ENCODE measurements at regions of chr12 and their contacts with region 1.

Region 1: DNA sequence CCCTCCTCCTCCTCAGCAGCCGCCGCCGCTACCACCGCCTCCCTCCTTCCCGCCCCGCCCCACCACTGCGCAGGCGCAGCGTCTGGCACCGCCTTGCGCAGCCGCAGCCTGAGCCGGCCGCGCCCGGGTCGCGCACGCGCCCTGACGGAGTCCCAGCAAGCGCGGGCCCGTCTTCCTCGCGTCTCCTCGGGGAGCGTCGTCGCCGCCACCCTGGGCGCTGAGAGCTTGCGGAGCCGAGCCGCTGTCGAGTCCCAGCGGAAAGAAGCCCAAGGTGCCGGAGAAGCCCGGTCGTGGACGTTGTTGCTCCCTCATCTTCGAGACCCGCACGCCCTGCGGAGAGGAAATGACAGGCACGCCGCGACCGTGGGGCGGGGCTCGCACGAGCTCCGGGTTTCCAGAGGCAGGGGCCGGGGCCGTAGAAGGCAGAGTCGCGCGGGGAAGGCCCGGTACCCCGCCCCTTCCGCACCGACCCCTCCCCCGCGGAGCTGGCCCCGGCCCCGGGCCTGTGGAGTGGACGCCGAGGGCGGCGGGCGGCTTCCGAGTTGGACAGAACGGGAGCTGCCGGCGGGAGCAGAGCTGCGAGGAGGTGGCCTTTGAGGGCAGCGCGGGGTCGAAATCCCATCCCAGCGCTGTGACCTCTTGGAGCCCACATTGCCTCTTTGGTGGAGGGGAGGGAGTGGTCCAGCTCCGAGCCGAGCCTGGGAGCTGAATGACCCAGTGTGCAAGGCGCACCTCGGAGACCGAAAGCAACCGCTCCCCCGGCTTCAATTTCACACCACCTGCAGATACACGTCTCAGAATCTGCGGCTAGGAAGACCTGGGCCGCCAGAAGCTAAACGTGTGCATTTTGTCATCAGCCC is 469 bp upstream of the RAB35 start:
- DNase-seq: peak; percentile 44 to 96 (median 92)

Region 2: DNA sequence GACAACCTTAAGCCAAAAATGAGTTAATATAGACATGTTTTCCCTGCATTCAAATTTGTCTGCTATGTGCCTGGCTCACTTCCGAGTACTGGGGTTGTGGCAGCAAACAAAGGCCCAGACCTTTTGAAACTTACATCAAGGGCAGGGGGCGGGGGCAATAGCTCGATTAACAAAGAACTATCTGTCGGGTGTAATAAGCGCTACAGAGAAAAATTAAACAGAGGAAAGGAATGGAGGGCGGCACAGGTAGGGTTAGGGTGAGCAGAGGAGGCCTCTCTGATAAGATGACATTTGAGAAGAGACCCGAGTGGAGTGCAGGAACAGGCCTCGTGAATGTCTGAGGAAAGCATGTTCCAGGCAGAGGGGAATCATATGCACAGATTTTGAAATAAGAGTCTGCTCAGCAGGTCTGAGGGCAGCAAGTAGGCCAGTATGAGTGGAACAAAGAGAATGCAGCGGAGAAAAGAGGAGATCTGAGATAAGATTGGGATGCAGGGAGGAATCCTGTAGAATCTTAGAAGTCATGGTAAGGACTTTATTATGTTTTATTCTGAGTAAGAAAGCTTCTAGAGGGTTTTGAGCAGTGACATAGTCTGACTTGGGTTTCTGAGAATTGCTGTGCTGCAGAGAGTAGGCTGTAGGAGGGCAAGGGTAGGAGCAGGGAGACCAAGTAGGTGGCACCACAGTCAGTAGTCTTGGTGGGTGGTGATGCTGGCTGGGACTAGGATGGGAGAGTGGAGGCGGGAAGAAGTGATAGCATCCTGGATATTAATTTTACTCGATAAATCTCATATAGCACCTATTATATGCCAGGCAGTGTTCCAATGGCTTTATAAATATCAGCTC is 75.4 kb before region 1 on chr12:
- intact Hi-C with region 1: no loop called
- DNase-seq: peak in 30 of 42 donors; percentile 7 to 84 (median 36)

Region 3: DNA sequence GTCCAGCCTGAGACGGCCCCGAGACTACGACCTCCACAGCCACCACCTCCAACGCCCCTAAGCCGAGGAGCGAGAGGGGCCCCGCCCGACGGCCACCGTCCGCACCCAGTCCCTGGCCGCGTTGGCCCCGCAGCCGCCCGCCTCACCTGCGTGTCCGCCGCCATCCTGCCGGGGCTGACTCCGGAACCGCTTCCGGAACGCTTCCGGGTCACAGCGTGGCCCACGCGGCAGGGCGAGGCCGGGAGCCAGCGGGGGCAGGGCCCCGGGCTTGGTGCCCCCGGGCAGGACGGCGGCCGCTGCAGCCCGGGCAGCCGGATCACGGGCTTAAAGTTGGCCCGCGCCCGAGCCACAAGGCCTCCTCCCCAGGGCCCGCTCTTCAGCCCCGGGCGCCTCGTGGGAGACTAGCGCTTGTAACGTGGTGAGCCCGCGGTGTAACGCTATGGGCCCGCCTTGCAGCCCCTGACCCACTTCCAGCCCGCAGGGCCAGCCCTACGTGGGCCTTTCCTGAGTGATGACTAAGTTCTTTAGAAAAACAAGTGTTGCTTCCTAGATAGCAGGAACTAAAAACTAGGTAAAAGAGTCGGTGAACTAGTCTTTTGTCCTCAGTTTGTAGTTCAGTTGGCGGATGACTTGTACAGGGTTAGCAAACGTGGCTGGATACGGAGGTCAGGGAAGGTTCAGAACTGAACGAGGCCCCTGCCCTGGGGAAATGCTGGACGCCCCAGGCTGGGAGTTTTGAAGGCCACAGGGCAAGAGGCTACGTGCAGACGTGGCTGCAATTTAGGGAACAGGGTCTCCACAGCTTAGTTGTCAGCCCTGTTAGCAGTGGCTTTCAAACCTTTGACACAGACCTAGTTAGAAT is 77.7 kb after region 1 on chr12 and contains the start of gene GCN1:
- intact Hi-C with region 1: loop called (anchors 10 kb)
- DNase-seq: peak; percentile 64 to 95 (median 91)

Region 4: DNA sequence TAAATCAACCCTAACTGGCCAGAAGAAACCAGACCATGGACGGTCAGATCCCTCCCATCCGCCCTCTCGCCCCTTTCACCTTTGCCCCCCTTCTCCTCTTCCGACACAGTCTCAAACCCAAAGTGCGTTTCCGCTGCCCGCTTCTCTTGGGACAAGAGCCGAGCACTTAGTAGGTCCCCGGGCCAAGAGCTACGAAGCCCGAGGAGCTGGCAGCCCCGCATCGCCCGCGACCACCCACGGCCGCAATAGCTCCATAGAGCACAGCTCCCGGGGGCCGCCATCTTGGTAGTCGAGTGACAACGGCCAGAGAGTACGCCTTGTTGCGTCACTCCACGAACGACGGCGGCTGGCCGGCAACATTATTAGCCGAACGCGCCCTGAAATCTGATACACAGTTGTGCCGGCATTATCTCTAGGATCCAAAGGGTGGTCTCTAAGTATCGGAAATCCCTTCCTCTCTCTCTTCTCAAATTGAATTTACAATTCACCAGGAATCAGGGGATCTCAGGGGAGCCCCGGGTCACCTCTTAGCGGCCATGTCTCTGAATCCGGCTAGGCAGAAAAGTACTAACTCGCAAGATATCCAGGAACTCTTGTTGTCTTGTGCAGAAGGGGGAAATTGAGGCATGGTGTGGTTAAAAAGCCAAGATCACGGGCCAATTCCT is 412.0 kb after region 1 on chr12 and contains the start of gene COQ5:
- intact Hi-C with region 1: no loop called
- DNase-seq: peak; percentile 91 to 98 (median 95)